Activated naive CD4-positive, alpha-beta T cell treated with anti-CD3 and anti-CD28 coated beads for 36 hours (primary cell): ENCODE measurements at regions of chr9 and their contacts with region 1.

Region 1: GRCh38 chr9:21831961-21832509 is 29.6 kb downstream of the MTAP start:
- DNase-seq: peak; percentile 83
- H3K4me3 Mint-ChIP-seq: no peak overlapping the region
- H3K27ac Mint-ChIP-seq: peak overlapping the region; percentile 77
- H3K4me1 Mint-ChIP-seq: peaks cover 65% of the 10 kb centered on the region
- H3K27me3 Mint-ChIP-seq: no peaks in the 10 kb centered on the region

Region 2: GRCh38 chr9:21802195-21803000 is 29.6 kb before region 1 on chr9 and contains the start of gene MTAP:
- CTCF ChIA-PET with region 1: interaction called, 3 read pairs
- intact Hi-C with region 1: loop called (anchors 2 kb)
- DNase-seq: peak; percentile 82
- H3K4me3 Mint-ChIP-seq: peak within 1 kb of the TSS; percentile 99
- H3K27ac Mint-ChIP-seq: peak within 1 kb of the TSS; percentile 97
- H3K4me1 Mint-ChIP-seq: peaks cover 41% of the 10 kb centered on the region
- H3K27me3 Mint-ChIP-seq: peaks cover 4% of the 10 kb centered on the region
- total RNA-seq, gene MTAP: 59.0 to 66.4 TPM

Region 3: DNA sequence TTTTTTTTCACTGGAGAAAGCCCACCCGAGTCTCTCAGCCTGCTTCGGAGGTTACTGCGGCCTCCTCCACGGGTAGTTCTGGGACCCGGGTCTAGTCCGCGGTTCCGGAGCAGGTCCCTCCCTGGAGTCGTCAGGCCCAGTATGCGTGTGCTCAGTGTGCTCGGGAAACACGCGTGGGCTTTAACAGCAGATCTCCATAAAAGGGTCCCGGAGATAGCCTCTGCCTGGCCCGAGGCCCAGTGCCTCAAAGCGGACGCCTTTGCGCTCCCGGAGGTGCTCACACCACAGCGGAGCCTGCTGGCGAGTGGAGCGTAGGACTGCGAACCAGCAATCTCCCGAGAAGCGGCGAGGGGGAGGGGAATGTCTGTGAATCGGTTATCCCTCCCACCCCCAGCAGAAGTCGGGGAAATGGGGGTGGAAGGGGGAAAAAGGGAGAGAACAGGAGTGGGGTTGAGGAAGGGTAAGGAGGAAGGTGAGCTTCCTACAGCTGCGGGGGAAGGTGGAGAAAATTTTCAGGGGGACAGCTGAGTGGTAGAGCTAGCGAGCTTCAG is 133.4 kb after region 1 on chr9:
- CTCF ChIA-PET with region 1: no interaction called
- intact Hi-C with region 1: loop called (anchors 1 kb)
- DNase-seq: peak; percentile 68
- H3K4me3 Mint-ChIP-seq: peak overlapping the region; percentile 51
- H3K27ac Mint-ChIP-seq: no peak overlapping the region
- H3K4me1 Mint-ChIP-seq: peaks cover 17% of the 10 kb centered on the region
- H3K27me3 Mint-ChIP-seq: peaks cover 86% of the 10 kb centered on the region

Region 4: DNA sequence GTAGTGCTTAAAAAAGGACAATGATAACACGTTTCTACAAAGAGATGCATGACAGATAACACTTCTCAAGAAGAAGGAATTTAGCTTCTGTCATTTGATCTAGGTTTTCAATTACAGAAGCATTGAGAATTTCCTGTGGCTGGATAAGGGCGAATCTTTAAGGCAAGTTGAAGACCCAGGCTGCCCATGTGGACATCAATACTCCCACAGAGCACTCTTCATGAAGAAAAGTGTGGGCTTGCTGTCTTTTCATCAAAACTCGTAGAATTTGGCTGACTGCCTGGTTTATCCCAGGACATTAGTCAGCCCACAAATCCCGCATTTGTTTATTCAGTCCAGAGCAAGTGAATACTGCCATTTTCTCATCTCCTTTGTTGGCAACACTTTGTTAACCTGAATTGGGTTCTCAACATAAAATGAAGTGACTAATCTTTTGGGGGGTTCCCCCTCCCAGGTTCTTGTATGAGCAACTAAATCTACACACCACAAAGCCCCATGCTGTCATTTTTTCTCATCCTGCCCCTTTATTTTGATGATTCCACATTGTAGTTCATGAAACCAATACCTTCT is 220.4 kb after region 1 on chr9:
- CTCF ChIA-PET with region 1: no interaction called
- intact Hi-C with region 1: loop called (anchors 1 kb)
- DNase-seq: peak; percentile 67
- H3K4me3 Mint-ChIP-seq: no peak overlapping the region
- H3K27ac Mint-ChIP-seq: no peak overlapping the region
- H3K4me1 Mint-ChIP-seq: peaks cover 29% of the 10 kb centered on the region
- H3K27me3 Mint-ChIP-seq: peaks cover 20% of the 10 kb centered on the region

Region 5: DNA sequence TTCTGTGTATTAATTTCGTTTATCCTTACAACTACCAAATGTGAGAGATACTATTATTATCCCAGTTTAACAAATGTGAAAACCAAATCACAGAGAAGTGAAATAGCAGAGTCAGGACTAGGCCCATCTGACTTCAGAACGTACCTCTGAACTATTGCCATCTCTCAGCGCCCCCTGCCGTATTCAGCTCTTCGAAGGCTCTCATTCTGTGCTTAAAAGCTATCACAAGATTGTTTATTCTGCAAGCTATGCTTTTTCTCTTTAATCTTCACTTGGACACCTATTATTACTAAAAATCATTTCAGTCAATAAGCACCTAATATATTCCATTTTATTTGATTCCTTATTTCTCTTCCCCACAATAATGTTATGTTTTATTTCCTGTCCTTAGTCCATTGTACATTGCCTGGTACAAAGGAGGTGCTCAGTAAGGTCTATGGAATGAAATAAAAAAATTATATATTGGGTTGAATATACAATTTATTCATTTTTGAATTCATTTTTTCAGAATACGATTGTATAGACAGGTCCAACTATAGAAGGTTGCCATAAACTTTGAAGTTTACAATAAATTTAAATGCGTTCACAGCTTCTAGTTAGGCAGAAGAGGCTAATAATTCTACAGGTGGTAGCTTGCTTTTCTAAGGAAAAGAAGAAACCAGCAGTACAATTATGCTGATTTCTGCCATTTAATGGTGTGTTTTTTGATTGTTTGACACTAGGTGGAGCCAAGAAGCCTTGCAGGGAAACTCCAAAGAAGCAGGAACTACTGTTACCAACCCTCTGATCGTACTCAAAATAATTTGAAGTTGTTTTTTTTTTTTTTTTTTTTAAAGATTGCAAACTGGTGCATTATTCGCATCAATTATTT is 412.3 kb after region 1 on chr9:
- CTCF ChIA-PET with region 1: no interaction called
- intact Hi-C with region 1: loop called (anchors 5 kb)
- DNase-seq: peak; percentile 46
- H3K4me3 Mint-ChIP-seq: no peak overlapping the region
- H3K27ac Mint-ChIP-seq: no peak overlapping the region
- H3K4me1 Mint-ChIP-seq: peaks cover 29% of the 10 kb centered on the region
- H3K27me3 Mint-ChIP-seq: peaks cover 19% of the 10 kb centered on the region